Gastrocnemius medialis (tissue), 4 donors: ENCODE measurements at regions of chr4 and their contacts with region 1.

Region 1: DNA sequence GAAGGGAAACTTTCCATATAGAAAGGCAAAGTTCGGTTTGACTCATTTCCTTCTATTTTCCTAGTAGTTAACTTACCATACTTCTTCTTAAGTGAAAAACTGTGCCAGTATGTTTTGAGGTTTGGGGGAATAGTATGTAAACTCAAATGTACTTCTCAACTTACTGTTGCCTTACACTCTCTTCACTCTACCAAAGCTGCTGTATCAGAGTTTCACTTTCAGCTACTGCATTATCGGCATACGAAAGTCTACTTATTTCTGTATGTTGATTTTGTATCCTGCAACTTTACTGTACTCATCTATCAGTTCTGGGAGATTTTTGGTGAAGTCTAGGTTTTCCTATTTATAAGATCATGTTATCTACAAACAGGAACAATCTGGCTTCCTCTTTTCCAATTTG is 932.7 kb downstream of the FAT4 start:
- DNase-seq: no peak
- ATAC-seq: no peak
- H3K4me3 ChIP-seq: no peak overlapping the region
- H3K27ac ChIP-seq: no peak overlapping the region
- H3K4me1 ChIP-seq: no peaks in the 10 kb centered on the region
- H3K27me3 ChIP-seq: no peaks in the 10 kb centered on the region
- CTCF ChIP-seq: no peak
- POLR2A ChIP-seq: no peak

Region 2: DNA sequence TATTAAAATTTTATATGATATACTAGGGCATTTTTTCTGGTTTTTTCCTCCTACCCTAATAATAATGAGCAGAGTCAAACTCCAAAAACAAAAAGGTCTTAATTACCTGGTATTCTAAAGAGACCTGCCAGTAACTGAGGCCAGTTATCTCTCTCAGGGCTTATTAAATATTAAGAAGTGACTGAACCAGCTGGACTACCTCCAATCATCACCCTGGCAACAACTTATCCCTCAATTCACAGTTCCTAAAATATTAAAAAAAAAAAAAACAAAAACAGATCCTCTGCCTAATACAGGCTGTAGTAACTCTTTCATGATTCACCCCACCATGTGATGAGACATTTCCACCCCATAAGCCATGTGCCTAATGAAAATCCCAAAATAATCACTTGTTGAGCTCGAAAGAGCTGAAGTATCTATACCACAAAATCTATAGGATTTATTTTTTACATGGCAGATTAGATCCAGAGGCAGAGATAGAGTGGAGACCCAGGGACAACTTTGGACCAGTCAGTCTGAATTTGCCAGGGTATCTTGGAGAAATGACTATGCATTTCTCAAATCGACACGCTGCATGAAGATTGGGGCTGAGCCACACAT is 234.6 kb before region 1 on chr4:
- in situ Hi-C with region 1: no loop called
- intact Hi-C with region 1: loop called (anchors 5 kb)
- DNase-seq: no peak
- ATAC-seq: no peak
- H3K4me3 ChIP-seq: no peak overlapping the region
- H3K27ac ChIP-seq: no peak overlapping the region
- H3K4me1 ChIP-seq: no peaks in the 10 kb centered on the region
- H3K27me3 ChIP-seq: no peaks in the 10 kb centered on the region
- CTCF ChIP-seq: no peak
- POLR2A ChIP-seq: no peak

Region 3: DNA sequence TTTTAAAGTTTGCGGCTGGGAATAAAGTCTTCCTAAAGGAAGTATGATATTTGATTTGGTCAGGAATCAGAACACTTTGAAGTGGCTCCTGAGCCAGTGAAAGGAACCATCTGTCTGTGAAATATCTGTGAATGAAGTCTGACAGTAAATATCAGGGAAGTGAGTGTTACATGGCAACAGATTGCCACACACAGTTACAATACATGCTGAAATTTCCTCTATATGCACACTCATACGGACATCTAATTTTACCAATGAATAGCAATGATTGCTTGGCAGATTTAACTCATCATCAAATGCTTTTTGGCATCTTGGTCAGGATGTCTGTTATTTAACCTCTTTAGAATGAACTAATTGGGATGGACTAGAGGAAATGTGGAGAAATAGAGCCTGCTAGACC is 91.1 kb after region 1 on chr4:
- in situ Hi-C with region 1: no loop called
- intact Hi-C with region 1: no loop called
- DNase-seq: no peak
- ATAC-seq: no peak
- H3K4me3 ChIP-seq: no peak overlapping the region
- H3K27ac ChIP-seq: no peak overlapping the region
- H3K4me1 ChIP-seq: no peaks in the 10 kb centered on the region
- H3K27me3 ChIP-seq: no peaks in the 10 kb centered on the region
- CTCF ChIP-seq: no peak
- POLR2A ChIP-seq: no peak